Body of pancreas (tissue), 4 donors: ENCODE measurements at regions of chr14 and their contacts with region 1.

Region 1: DNA sequence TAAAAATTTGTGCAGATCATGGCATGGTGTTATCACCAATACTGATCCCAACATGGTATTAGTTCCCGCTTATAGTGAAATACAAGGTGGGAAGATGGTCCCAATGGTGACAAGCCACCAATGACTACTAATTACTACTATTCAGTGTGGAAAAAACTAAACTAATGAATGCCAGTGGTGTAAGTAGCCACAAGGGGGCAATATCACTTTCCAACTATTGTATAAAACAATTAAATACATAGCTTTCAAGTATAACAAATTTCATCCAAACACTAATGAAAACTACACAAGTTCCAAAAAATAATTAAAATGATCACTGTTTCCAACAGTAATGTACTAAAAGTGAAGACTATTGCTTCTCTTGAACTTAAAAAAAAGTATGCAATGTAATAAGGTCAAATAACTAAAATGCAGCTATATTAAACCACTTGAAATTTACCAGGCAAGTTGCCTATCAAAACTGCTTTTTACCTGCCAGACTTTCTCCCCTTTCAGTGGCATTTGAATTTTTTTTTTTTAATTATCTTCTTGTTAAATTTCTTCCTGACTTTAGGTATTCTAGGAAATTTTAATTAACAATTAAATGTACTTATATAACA is 58.0 kb downstream of the PAPLN start:
- DNase-seq: peak in 2 of 4 donors; percentile 22 to 55
- ATAC-seq: peak; percentile 46
- H3K4me3 ChIP-seq: no peak overlapping the region
- H3K27ac ChIP-seq: no peak overlapping the region
- H3K4me1 ChIP-seq: peaks cover 31% of the 10 kb centered on the region
- H3K27me3 ChIP-seq: no peaks in the 10 kb centered on the region
- CTCF ChIP-seq: peak; percentile 33 to 86 (median 71)
- POLR2A ChIP-seq: no peak

Region 2: GRCh38 chr14:73477618-73478266 is 182.4 kb after region 1 on chr14:
- intact Hi-C with region 1: loop called (anchors 5 kb)
- DNase-seq: peak in 1 of 4 donors; percentile 53
- ATAC-seq: no peak
- H3K4me3 ChIP-seq: no peak overlapping the region
- H3K27ac ChIP-seq: no peak overlapping the region
- H3K4me1 ChIP-seq: no peaks in the 10 kb centered on the region
- H3K27me3 ChIP-seq: no peaks in the 10 kb centered on the region
- CTCF ChIP-seq: no peak
- POLR2A ChIP-seq: no peak